ENCODE measurements at regions of chr17 and their contacts with region 1.

Region 1: DNA sequence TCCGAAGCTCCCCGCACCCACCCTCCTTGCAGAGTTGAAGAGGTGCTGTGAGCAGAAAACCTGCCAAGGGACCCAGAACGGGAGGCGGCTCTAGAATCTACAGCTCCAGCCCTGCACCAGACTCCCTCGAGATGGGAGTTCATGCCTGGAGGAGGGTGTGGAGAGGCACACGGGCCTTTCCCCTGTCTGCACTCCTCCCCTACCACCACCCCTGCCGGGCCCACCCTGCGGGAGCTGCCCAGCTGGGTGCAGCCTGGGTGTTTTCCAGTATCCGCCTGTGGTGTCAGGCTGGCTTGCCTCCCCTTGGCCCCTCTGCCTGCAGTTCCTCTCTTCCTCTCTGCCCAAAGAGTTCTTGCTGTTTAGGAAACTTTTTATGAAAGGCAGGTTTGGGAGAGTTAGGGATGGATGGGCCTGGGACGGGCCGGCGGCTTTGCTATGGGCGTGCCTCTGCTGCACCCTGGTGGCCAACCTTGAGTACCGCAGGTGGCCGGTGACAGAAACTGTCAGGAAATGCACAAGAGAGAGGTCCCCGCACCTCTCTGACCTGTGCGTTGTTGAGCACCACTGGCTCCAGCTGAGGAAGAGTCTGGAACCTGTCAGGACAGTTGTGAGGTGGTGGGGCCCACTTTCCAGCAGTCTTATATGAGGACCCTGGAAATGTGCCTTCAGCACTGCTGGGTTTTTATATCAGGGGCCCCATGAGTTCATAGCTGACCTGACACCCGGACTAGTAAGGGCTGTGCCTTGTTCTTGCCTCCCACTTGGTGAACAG is 354.1 kb downstream of the SEC14L1 start:
- DNase-seq: peak; percentile 50 to 92 (median 82)

Region 2: DNA sequence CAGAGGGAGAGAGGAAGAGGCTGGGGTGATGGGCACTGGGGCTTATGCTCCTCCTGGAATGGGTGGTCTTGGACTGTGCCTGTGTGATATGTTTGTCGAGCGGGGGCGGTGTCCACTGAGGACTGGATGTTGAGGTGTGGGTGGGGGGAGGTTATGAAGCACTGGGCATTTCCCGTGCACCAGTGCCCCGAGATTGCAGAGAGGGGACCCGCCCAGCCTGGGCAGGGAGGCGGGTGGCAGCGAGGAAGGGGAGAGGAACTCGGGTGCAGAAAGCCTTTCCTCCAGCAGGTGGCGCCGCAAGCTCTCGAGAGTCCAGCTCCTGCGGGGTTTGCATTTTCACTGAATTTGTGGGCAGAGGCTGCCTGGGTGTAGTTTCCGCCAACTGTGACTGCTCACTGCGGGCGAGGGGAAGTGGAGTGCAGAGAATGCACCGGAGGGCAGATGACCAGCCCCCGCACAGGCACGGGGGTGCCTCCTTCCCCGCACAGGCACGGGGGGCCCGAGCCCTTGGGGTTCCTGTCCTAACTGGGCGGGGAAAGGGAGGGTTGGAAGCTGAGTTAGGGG is 163.5 kb before region 1 on chr17:
- intact Hi-C with region 1: loop called (anchors 2 kb)
- DNase-seq: peak; percentile 80 to 97 (median 92)

Region 3: GRCh38 chr17:77602062-77602746 is 107.4 kb after region 1 on chr17:
- intact Hi-C with region 1: no loop called
- DNase-seq: peak in 4 of 42 donors; percentile 7 to 39 (median 24)